PC-3 (cell line): ENCODE measurements at regions of chr1 and their contacts with region 1.

Region 1: GRCh38 chr1:1826356-1827088 is 48.3 kb upstream of the NADK start:
- DNase-seq: no peak
- ATAC-seq: peak; percentile 59
- H3K4me3 ChIP-seq: no peak overlapping the region
- H3K27ac ChIP-seq: no peak overlapping the region
- H3K4me1 ChIP-seq: no peaks in the 10 kb centered on the region
- H3K27me3 ChIP-seq: no peaks in the 10 kb centered on the region
- CTCF ChIP-seq: no peak

Region 2: GRCh38 chr1:1806890-1807289 is 19.6 kb before region 1 on chr1:
- CTCF ChIA-PET with region 1: no interaction called
- POLR2A ChIA-PET with region 1: interaction called, 21 read pairs
- intact Hi-C with region 1: no loop called
- DNase-seq: no peak
- ATAC-seq: no peak
- H3K4me3 ChIP-seq: no peak overlapping the region
- H3K27ac ChIP-seq: no peak overlapping the region
- H3K4me1 ChIP-seq: no peaks in the 10 kb centered on the region
- H3K27me3 ChIP-seq: no peaks in the 10 kb centered on the region
- CTCF ChIP-seq: no peak

Region 3: GRCh38 chr1:1858382-1859086 is 32.0 kb after region 1 on chr1:
- CTCF ChIA-PET with region 1: interaction called, 10 read pairs
- POLR2A ChIA-PET with region 1: no interaction called
- intact Hi-C with region 1: no loop called
- DNase-seq: peak; percentile 76
- ATAC-seq: peak; percentile 48
- H3K4me3 ChIP-seq: peak overlapping the region; percentile 12; the same call in 1 of the 2 replicates
- H3K27ac ChIP-seq: peak overlapping the region; percentile 72
- H3K4me1 ChIP-seq: peaks cover 33% of the 10 kb centered on the region
- H3K27me3 ChIP-seq: no peaks in the 10 kb centered on the region
- CTCF ChIP-seq: peak; percentile 71